ENCODE measurements at regions of chr16 and their contacts with region 1.

Region 1: DNA sequence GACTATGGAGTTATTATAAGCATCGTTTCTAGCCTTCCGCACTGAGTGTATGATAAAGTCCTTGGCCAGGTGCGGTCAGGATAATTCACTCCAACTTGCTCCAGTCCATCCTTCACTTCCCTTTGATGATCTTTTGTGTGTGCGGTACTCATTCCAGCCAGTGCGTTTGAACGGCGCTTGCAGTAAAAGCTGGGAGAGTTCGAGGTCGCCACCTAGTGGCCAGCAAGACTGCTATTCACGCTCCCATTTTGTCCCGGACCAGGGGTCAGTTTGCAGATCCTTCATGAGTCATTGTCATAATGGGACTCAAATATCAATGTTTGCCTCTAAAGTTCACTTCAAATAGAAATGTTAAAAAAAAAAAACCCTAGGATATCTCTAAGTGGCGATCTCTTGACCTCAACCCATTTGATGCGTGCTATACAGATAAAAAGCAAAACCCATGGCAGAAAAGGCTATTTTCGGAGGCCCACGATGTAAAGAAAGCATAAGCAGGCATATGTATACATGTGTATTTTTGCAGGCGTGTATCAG is 417.1 kb downstream of the TMEM114 start:
- DNase-seq: peak; percentile 56 to 92 (median 79)

Region 2: DNA sequence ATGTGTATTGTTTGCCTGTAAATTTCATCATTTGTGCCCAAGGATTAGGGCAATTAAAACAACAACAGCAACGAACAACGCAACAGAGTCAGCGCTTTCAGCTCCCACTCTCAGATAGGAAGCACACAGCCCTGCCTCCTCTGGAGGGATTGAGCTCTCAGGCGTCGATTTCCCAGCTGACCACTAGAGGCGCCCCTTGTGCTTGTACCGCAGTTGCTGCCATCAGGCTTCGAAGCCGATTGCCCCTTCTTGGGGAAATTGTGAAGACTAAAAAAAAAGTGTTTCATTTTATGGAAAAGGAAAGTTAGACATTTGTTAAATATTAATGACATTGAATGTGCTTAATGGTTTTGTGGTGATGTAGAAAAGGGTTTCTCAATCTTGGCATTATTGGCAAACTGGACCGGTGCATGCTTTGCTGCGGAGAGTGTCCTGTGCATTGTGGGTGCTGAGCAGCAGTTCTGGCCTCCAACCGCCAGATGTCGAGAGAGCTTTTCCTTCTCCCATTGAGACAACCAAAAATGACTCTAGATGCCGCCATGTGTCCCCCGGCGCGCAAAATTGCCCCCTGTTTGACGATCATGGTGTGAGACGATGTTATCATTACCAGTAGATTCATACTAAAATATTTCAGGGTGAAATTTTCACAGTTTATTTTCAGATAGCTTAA is 1490.9 kb before region 1 on chr16:
- intact Hi-C with region 1: loop called (anchors 10 kb)
- DNase-seq: peak in 41 of 42 donors; percentile 17 to 83 (median 52)